Left cardiac atrium (tissue), 4 donors: ENCODE measurements at regions of chr7 and their contacts with region 1.

Region 1: DNA sequence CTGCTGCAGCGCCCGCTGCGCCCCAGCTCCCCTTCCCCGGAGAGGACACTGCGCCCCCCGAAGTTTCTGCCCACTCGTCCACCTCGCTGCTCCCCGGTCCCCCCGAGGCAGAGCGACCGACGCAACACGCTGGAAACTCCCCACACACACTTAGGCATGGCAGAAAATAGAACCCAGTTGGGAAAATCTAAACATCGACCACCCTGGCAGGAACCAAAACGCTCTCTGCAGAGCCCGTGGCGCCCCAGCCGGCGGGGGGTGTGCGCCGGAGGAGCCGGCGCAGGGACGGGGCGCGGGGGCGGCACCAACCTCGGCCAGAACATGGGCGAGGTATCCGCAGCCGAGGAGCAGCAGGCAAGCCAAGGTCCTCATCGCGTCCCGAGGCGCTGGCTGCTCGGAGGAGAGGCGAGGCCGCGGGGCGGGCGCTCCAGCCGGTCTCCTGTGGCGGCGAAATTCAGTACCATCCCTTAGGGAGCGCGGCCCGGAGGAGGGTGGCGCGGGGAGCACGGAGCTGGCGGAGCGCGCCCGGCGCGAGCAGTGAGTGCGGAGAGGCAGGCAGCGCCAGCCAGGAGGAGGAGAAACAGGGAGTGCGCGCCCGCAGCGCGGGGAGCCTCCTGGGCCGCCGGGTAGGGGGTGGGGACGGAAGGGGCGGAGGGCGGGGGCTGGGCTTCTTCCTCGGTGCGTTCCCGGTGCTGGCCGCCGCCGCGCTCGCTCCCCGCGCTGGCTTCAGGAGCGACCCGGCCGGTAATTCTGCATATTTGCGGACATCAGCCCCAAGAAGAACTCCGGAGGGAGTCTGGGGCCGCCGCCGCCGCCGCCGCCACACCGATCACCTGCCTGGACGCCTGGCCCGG is 789 bp downstream of the PDGFA start:
- DNase-seq: peak; percentile 85
- ATAC-seq: peak; percentile 60 to 61

Region 2: DNA sequence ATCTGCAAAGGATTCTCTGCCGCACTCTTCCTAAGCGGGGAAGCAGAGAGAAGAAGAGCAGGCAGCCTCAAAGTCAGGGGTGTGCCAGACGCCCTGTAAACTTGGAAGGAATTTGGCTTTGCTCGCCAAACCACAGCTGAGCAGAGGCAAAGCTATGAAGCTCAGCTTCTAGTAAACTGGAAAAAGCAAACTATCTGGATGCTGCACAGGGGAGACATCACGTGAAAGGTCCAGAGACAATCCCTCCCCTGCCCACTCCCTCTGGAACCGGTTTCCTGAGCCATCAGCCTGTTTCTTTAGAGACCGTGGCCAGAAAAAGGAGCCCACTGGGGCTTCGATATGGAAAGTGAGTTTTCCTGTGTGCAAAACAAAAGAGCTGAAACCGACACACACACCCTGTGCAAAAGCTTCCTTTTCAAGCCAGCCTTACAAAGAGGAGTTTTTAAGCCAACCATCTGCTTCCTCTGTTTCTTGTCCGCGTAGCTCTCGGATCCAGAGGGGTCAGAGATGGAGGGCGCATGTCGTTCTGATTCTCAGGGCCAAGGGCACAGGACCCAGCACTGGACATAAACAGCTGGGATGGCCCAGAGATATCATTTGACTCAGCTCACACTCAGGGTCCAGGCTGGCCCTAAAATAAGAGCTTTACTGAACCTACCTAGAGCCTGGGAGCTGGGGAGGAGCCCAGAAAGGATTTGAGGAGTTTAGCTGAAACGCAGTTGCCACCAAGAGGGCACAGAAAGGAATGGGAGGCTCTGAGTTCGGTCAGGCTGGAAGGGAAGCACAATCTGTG is 149.5 kb after region 1 on chr7:
- intact Hi-C with region 1: loop called in 1 of 2 experiments (anchors 5 kb)
- DNase-seq: no peak
- ATAC-seq: peak; percentile 21 to 57

Region 3: GRCh38 chr7:732094-732541 is 213.3 kb after region 1 on chr7:
- intact Hi-C with region 1: loop called (anchors 5 kb)
- DNase-seq: peak; percentile 52
- ATAC-seq: peak; percentile 70 to 74

Region 4: DNA sequence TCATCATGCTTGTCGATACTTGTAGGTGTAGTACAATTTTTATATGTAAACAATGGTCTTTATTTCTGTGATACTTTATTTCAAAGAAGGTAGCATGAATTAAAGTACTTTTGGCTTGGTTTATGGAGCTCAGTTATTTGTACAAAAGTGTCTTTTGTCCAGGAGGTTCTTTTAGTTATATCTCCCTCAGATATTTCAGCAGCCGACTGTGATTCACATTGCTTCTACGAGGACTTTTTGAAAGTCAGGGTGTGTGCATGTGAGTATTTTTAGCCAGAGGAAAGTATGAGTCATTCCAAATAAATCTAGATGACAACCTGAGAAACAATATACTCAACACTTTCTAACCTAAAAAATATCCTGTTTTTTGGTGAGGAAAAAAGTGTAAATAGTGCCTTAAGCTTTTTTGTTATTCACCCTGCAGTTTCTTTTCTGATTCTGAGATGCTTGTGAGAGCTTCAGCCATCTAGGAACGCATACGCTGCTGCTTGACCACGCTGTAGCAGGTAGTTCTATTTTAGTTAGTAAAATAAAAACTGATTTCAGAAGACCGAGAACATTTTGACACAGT is 312.8 kb after region 1 on chr7:
- intact Hi-C with region 1: no loop called
- DNase-seq: peak; percentile 17
- ATAC-seq: peak; percentile 74 to 86

Region 5: DNA sequence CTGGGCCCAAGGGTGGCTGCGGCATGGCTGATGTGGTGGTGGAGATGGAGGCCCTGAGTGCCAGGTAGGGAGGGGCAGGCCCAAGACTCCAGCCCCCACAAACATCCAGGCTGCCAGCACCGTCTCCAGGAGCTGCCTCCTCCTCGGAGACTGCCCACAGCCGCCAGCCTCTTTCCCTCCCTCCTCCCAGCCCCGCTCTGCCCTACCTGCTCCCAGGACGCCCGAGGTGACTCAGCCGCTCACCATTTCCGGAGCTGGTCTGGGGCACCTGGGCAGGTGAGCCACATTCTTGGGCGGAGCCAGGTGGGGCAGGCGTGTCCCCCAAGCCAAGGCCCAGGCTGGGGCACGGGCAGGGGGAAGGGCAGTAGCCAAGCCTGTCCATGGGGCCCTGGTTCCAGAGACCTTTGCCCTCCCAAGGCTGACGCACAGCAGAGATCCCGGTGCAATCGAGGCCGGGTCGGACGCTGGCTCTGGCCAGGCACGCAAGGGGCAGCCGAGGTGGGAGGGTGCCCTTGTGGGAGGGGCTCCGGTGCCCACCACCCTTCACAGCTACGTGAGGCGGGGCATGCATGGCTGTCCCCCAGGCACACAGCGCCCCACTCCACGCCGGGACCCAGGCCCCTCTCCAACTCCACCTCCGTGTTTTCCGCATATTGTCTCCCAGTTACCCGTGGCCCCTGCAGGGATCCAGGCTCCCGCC is 426.8 kb after region 1 on chr7:
- intact Hi-C with region 1: no loop called
- DNase-seq: no peak
- ATAC-seq: peak in 1 of 2 donors; percentile 32